ENCODE measurements at regions of chr5 and their contacts with region 1.

Region 1: DNA sequence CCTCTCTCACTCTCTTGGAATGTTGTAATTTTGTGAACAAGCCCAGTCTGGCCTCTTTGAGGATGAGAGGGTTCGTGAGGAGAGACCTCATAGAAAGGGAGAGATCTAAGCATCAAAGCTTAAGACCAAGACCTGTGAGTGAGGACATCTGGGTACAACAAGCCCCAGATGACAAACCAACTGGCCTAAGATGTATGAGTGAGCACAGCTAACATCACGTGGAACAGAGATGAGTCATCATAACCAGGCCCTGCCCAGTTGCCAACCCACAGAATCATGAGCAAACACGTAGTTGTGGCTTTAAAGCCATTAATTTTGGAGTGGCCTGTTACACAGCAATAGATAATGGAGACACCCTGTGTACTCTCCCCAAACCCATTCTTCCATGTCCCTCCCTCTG is 439.1 kb upstream of the KIF2A start:
- DNase-seq: peak; percentile 48
- H3K4me3 Mint-ChIP-seq: no peak overlapping the region
- H3K27ac Mint-ChIP-seq: no peak overlapping the region
- H3K4me1 Mint-ChIP-seq: no peaks in the 10 kb centered on the region
- H3K27me3 Mint-ChIP-seq: no peaks in the 10 kb centered on the region

Region 2: GRCh38 chr5:61823781-61824180 is 43.1 kb before region 1 on chr5:
- intact Hi-C with region 1: loop called (anchors 1 kb)
- DNase-seq: no peak
- H3K4me3 Mint-ChIP-seq: no peak overlapping the region
- H3K27ac Mint-ChIP-seq: no peak overlapping the region
- H3K4me1 Mint-ChIP-seq: no peaks in the 10 kb centered on the region
- H3K27me3 Mint-ChIP-seq: no peaks in the 10 kb centered on the region

Region 3: DNA sequence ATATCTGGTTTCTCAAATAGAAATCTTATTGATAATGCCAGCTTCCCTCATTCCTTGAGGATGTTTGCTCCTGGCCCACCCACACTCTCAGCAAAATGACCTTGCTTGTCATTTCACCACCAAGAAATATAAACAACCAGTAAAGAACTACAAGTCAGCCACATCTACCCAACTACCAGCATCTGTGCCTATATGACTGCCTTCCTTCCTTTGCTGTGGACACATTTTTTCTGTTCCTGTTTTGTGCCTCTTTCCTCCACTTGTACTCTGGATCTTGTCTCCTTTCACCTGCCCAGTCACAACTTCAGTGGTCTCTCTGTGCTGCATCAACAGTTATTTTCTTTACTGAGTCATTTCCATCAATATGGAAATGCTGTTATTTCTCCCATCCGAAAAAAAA is 459.4 kb after region 1 on chr5:
- intact Hi-C with region 1: no loop called
- DNase-seq: no peak
- H3K4me3 Mint-ChIP-seq: peak overlapping the region; percentile 2
- H3K27ac Mint-ChIP-seq: peak overlapping the region; percentile 78
- H3K4me1 Mint-ChIP-seq: peaks cover 59% of the 10 kb centered on the region
- H3K27me3 Mint-ChIP-seq: no peaks in the 10 kb centered on the region

Measured in activated CD4-positive, alpha-beta T cell treated with anti-CD3 and anti-CD28 coated beads, Interleukin-2, amount 10 ng/mL, durations not matched to agents 24 days and 14 days (primary cell).